ENCODE measurements at regions of chr13 and their contacts with region 1.

Region 1: DNA sequence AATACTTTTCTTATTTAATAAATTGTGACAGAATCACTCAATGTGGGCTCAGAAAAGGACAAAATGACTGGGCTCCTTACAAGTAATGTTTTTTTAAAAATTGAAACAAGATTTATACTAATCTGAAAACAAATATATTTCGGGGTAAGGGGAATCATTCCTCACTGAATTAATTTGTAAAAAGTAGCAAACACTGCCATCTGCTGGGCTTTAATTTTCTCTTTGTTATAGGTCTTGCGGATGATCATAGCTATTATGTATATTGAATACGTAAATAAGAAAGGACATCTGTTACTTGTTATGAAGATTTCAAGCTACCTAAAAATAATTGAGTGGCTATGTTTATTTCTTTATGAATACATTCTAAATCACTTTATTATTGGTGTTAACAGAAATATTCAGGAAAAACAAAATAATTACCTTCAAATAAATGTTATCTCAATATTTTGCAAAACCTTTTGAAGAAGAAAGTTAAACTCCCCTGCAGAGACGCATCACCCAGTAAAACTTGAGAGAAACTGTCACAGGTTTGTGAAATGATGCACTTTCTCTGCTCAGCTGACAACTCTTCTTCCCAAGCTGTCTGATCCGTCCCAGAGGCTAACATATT is 17.8 kb upstream of the ENOX1 start:
- DNase-seq: peak; percentile 83
- H3K4me3 ChIP-seq: peak overlapping the region in 1 of 3 experiments; percentile 60
- H3K27ac ChIP-seq: peak overlapping the region; percentile 5
- H3K4me1 ChIP-seq: peaks cover 7% of the 10 kb centered on the region
- H3K27me3 ChIP-seq: no peaks in the 10 kb centered on the region
- CTCF ChIP-seq: peak; percentile 6 to 19
- POLR2A ChIP-seq: no peak

Region 2: GRCh38 chr13:42969558-42970172 is 834.9 kb before region 1 on chr13:
- CTCF ChIA-PET with region 1: interaction called, 64 read pairs
- POLR2A ChIA-PET with region 1: no interaction called
- dilution Hi-C with region 1: no loop called
- intact Hi-C with region 1: loop called (anchors 1 kb)
- DNase-seq: peak; percentile 62
- H3K4me3 ChIP-seq: no peak overlapping the region
- H3K27ac ChIP-seq: no peak overlapping the region
- H3K4me1 ChIP-seq: no peaks in the 10 kb centered on the region
- H3K27me3 ChIP-seq: no peaks in the 10 kb centered on the region
- CTCF ChIP-seq: peak; percentile 78 to 80
- POLR2A ChIP-seq: no peak

Region 3: GRCh38 chr13:43303033-43303729 is 501.4 kb before region 1 on chr13:
- CTCF ChIA-PET with region 1: interaction called, 27 read pairs
- POLR2A ChIA-PET with region 1: no interaction called
- dilution Hi-C with region 1: no loop called
- intact Hi-C with region 1: loop called (anchors 1 kb)
- DNase-seq: peak; percentile 73
- H3K4me3 ChIP-seq: no peak overlapping the region
- H3K27ac ChIP-seq: no peak overlapping the region
- H3K4me1 ChIP-seq: peaks cover 57% of the 10 kb centered on the region
- H3K27me3 ChIP-seq: no peaks in the 10 kb centered on the region
- CTCF ChIP-seq: peak; percentile 64 to 70
- POLR2A ChIP-seq: no peak

Region 4: DNA sequence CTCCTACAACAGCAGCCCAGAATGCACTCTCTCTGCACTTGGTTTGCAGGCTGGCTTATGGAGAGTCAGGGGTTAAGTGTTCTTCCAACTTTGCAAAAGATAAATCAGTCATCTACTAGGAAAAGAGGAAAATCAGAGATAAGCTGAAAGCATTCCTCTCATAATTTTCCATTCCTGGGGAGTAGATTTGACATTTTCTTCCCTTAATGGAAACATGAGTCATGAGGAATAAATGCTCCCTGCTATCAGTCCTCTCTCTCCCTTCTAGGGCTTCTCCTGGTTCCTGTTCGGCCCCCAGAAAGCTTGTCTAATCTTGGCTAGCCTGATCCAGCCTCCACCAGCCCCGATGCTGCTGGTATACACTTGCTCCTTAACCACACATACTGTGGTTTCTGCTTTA is 10.6 kb after region 1 on chr13:
- CTCF ChIA-PET with region 1: interaction called, 37 read pairs
- POLR2A ChIA-PET with region 1: no interaction called
- dilution Hi-C with region 1: no loop called
- intact Hi-C with region 1: no loop called
- DNase-seq: peak; percentile 74
- H3K4me3 ChIP-seq: no peak overlapping the region
- H3K27ac ChIP-seq: no peak overlapping the region
- H3K4me1 ChIP-seq: peaks cover 20% of the 10 kb centered on the region
- H3K27me3 ChIP-seq: no peaks in the 10 kb centered on the region
- CTCF ChIP-seq: no peak
- POLR2A ChIP-seq: no peak

Region 5: GRCh38 chr13:43872181-43872580 is 67.6 kb after region 1 on chr13:
- CTCF ChIA-PET with region 1: interaction called, 13 read pairs
- POLR2A ChIA-PET with region 1: no interaction called
- dilution Hi-C with region 1: no loop called
- intact Hi-C with region 1: loop called (anchors 5 kb)
- DNase-seq: no peak
- H3K4me3 ChIP-seq: no peak overlapping the region
- H3K27ac ChIP-seq: no peak overlapping the region
- H3K4me1 ChIP-seq: no peaks in the 10 kb centered on the region
- H3K27me3 ChIP-seq: no peaks in the 10 kb centered on the region
- CTCF ChIP-seq: no peak
- POLR2A ChIP-seq: no peak

Region 6: DNA sequence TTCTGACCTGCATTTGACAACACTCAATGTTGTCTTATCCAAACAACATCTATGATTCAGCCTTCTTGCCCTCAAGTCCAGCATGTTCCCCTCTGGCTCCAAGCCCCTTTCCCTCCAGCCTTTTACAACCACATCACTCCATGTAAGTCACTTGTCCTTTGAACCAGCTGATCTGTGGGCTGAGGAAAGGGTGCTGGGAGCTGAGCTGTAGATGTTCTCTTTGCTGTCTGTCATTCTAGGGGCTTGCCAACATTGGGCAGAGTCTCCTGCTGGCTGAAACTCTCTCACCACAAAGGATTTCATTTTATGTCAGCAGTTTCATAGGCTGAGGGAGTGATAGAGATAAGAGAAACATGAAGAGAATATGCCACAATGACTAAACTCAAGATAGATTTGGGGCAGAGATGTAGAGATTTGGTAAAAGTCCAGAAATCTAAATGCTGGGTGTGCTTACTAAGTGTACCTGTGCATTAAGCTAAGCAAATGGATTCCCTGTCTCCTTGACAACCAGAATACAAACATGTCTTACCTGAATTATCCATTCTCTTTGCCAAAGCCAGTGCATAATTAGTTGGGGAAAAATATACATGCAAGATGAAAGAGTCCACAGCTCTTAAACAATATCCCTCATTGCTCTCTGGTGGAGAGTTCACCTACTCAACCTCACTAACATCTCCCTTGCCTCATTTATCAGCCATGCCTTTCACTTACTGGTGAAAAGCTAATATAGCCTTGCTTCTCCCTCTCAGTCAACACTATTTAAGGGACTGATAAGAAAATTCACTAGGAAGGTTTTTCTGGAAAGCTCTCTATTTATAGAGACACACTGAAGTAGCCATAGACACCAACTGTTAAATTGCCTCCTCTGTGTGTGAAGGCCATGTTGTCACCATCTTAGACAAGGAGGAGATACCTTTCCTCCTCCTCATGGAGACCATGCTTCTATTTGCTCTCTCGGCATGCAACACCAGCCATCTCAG is 393.5 kb after region 1 on chr13:
- CTCF ChIA-PET with region 1: no interaction called
- POLR2A ChIA-PET with region 1: no interaction called
- dilution Hi-C with region 1: no loop called
- intact Hi-C with region 1: no loop called
- DNase-seq: no peak
- H3K4me3 ChIP-seq: no peak overlapping the region
- H3K27ac ChIP-seq: no peak overlapping the region
- H3K4me1 ChIP-seq: no peaks in the 10 kb centered on the region
- H3K27me3 ChIP-seq: no peaks in the 10 kb centered on the region
- CTCF ChIP-seq: no peak
- POLR2A ChIP-seq: no peak